Transverse colon (tissue), 4 donors: ENCODE measurements at regions of chr17 and their contacts with region 1.

Region 1: GRCh38 chr17:51371732-51372151 is 111.4 kb downstream of the UTP18 start:
- DNase-seq: no peak
- H3K4me3 ChIP-seq: no peak overlapping the region
- H3K27ac ChIP-seq: no peak overlapping the region
- H3K4me1 ChIP-seq: no peaks in the 10 kb centered on the region
- H3K27me3 ChIP-seq: no peaks in the 10 kb centered on the region
- CTCF ChIP-seq: peak in 4 of 5 experiments; percentile 20 to 31 (median 28)
- EP300 ChIP-seq: no peak
- POLR2A ChIP-seq: no peak

Region 2: GRCh38 chr17:50731575-50732460 is 639.9 kb before region 1 on chr17:
- in situ Hi-C with region 1: no loop called
- intact Hi-C with region 1: no loop called
- DNase-seq: no peak
- H3K4me3 ChIP-seq: no peak overlapping the region
- H3K27ac ChIP-seq: peak overlapping the region in 2 of 4 donors; percentile 7 to 36
- H3K4me1 ChIP-seq: peaks cover 40 to 88% (median 53%) of the 10 kb centered on the region in 4 donors
- H3K27me3 ChIP-seq: no peaks in the 10 kb centered on the region
- CTCF ChIP-seq: no peak
- EP300 ChIP-seq: no peak
- POLR2A ChIP-seq: no peak

Region 3: GRCh38 chr17:51456942-51457341 is 85.2 kb after region 1 on chr17:
- in situ Hi-C with region 1: no loop called
- intact Hi-C with region 1: no loop called
- DNase-seq: no peak
- H3K4me3 ChIP-seq: no peak overlapping the region
- H3K27ac ChIP-seq: no peak overlapping the region
- H3K4me1 ChIP-seq: no peaks in the 10 kb centered on the region
- H3K27me3 ChIP-seq: no peaks in the 10 kb centered on the region
- CTCF ChIP-seq: no peak
- EP300 ChIP-seq: no peak
- POLR2A ChIP-seq: no peak

Region 4: GRCh38 chr17:52306314-52306713 is 934.6 kb after region 1 on chr17:
- in situ Hi-C with region 1: no loop called
- intact Hi-C with region 1: loop called (anchors 10 kb)
- DNase-seq: no peak
- H3K4me3 ChIP-seq: no peak overlapping the region
- H3K27ac ChIP-seq: no peak overlapping the region
- H3K4me1 ChIP-seq: no peaks in the 10 kb centered on the region
- H3K27me3 ChIP-seq: no peaks in the 10 kb centered on the region
- CTCF ChIP-seq: no peak
- EP300 ChIP-seq: no peak
- POLR2A ChIP-seq: no peak